GM12878 (cell line): ENCODE measurements at regions of chr4 and their contacts with region 1.

Region 1: DNA sequence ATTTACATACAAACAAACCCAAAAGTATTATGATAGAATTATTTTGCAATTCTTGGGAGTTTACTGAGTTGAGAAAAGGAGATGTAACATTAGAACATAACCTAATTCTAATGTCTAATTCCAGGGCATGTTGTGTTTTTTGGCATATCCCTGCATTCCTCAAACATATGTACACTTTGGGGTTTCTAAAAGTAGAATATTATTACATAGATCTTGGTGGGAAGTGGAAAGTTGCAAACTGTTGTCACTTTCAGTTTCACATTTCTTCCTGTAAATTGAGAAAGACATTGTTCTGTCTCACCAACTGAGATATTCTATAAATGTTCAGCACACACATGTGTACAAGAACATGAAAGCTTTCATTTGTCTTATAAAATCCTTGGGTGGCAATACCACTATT is 24.4 kb upstream of the GBA3 start:
- DNase-seq: no peak
- ATAC-seq: peak; percentile 48
- H3K4me3 ChIP-seq: no peak overlapping the region
- H3K27ac ChIP-seq: no peak overlapping the region
- H3K4me1 ChIP-seq: no peaks in the 10 kb centered on the region
- H3K27me3 ChIP-seq: no peaks in the 10 kb centered on the region
- CTCF ChIP-seq: no peak
- EP300 ChIP-seq: no peak
- POLR2A ChIP-seq: no peak
- RAD21 ChIP-seq: no peak

Region 2: GRCh38 chr4:22678940-22679854 is 10.9 kb after region 1 on chr4:
- CTCF ChIA-PET with region 1: interaction called, 3 read pairs
- POLR2A ChIA-PET with region 1: interaction called, 6 read pairs
- RAD21 ChIA-PET with region 1: interaction called, 32 read pairs
- SMC1A ChIA-PET with region 1: interaction called, 41 read pairs
- in situ Hi-C with region 1: no loop called
- intact Hi-C with region 1: no loop called
- DNase-seq: no peak
- ATAC-seq: no peak
- H3K4me3 ChIP-seq: no peak overlapping the region
- H3K27ac ChIP-seq: no peak overlapping the region
- H3K4me1 ChIP-seq: no peaks in the 10 kb centered on the region
- H3K27me3 ChIP-seq: no peaks in the 10 kb centered on the region
- CTCF ChIP-seq: no peak
- EP300 ChIP-seq: no peak
- POLR2A ChIP-seq: no peak
- RAD21 ChIP-seq: no peak

Region 3: GRCh38 chr4:22688236-22688635 is 19.9 kb after region 1 on chr4:
- CTCF ChIA-PET with region 1: interaction called, 3 read pairs
- POLR2A ChIA-PET with region 1: no interaction called
- RAD21 ChIA-PET with region 1: interaction called, 5 read pairs
- SMC1A ChIA-PET with region 1: interaction called, 10 read pairs
- in situ Hi-C with region 1: no loop called
- intact Hi-C with region 1: no loop called
- DNase-seq: no peak
- ATAC-seq: no peak
- H3K4me3 ChIP-seq: no peak overlapping the region
- H3K27ac ChIP-seq: no peak overlapping the region
- H3K4me1 ChIP-seq: no peaks in the 10 kb centered on the region
- H3K27me3 ChIP-seq: no peaks in the 10 kb centered on the region
- CTCF ChIP-seq: no peak
- EP300 ChIP-seq: no peak
- POLR2A ChIP-seq: no peak
- RAD21 ChIP-seq: no peak